T-cell (primary cell): ENCODE measurements at regions of chr19 and their contacts with region 1.

Region 1: DNA sequence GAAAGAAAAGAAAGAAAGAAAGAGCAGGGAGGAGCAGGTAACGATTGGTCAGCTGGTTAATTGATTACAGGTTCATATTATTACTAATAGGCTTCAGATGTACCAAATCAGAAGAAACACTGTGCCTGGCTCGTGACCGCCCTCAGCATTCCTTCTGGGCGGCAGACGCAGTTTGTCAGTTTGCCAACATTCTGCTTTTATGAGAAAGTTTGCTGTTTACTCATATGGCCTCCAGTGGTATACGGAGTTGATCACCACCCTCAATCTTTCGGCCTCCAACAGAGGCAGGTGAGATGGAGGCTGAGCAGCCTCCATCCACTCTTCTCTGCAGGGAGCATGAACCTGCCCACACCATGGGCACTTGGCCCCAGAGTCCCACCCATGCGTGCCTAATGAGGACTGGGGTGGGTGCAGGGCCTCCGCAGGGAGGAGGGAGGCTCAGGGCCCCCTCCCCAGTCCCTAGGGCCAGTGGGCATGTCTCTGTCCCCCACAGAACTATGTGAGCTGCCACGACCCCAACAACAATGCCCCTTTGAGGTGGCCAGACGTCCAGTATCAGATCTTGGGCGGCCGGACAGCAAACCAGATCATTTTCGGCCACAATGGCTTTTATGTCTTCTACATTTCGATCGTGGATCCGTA is 8.8 kb downstream of the PRR22 start:
- DNase-seq: no peak
- ATAC-seq: no peak
- H3K4me3 ChIP-seq: no peak overlapping the region
- H3K4me3 Mint-ChIP-seq: no peak overlapping the region
- H3K27ac ChIP-seq: no peak overlapping the region
- H3K27ac Mint-ChIP-seq: no peak overlapping the region
- H3K4me1 ChIP-seq: no peaks in the 10 kb centered on the region
- H3K4me1 Mint-ChIP-seq: no peaks in the 10 kb centered on the region
- H3K27me3 ChIP-seq: peaks cover 0 to 24% of the 10 kb centered on the region in 2 experiments
- H3K27me3 Mint-ChIP-seq: peaks cover 0 to 3% of the 10 kb centered on the region in 2 donors

Region 2: DNA sequence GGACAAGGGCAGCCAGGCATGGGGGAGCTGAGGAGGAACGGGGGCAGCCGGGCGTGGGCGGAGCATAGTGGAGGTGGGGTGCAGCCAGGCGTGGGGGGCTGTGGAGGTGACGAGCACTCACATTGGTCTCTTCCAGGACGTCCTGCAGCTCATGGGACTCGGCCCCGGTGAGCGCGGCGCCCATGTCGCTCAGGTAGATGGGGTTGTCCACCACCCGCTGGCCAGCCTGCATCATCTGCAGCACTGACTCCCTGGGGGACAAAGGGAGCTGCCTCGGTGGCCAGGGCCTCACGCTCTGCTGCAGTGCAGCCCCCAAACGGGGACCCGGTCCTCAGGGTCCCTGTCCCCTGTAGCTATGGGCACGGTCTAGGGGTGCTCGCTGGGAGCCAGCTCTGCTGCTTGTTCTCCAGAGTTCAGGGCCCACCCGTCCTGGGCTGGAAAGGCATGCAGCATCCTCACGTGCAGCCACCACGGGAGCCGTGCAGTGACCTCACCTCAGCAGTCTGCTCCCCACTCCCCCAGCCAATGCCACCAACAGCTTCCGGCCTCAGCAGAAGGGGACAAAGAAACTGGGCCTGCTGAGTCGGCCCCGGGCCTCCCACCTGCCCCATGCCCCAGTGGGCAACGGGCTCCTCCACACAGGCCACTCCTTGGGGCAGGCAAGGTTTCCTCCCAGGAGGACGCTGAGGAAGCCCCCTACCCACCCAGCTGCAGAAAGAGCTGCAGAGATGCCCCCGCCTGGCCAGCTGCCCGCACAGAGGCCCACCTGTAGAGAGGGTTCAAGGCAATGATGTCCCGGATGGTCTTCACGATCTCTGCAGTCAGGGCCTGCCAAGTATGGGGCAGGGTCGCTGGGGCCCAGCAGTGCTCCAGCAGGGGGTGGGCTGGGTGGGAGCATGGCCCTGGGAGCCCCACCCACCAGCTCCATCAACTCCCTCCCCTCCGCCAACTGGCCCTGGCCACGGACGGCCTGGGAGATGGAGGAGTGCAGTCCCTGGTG is 67.9 kb before region 1 on chr19:
- CTCF ChIA-PET with region 1: no interaction called
- POLR2A ChIA-PET with region 1: no interaction called
- DNase-seq: no peak
- ATAC-seq: peak in 2 of 4 experiments; percentile 10 to 17
- H3K4me3 ChIP-seq: no peak overlapping the region
- H3K4me3 Mint-ChIP-seq: no peak overlapping the region
- H3K27ac ChIP-seq: no peak overlapping the region
- H3K27ac Mint-ChIP-seq: no peak overlapping the region
- H3K4me1 ChIP-seq: no peaks in the 10 kb centered on the region
- H3K4me1 Mint-ChIP-seq: no peaks in the 10 kb centered on the region
- H3K27me3 ChIP-seq: no peaks in the 10 kb centered on the region
- H3K27me3 Mint-ChIP-seq: no peaks in the 10 kb centered on the region

Region 3: DNA sequence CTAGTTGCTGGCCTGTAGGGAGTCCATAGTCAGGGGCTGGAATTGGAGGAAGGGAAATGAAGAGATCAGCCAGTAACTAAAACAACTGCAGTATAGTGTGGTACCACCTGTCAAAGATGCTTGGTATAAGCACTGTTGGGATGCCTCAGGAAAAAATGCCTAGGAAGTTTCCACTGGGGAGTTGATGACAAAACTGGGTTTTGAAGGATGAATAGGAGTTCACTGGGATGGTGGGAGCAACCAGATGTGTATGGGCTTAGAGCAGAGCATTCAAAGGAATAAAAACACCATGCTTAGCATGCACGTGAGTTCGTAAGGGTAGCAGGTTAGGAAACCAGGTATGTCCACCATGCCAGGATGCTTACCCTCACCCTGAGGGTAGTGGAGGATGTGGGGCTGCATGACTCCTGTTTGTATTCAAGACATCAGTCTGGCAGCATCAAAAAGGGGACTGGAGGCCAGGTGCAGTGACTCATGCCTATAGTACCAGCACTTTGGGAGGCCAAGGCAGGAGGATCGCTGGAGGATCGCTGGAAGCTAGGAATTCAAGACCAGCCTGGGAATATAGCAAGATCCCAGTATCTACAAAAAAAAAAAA is 48.2 kb before region 1 on chr19:
- CTCF ChIA-PET with region 1: no interaction called
- POLR2A ChIA-PET with region 1: no interaction called
- DNase-seq: no peak
- ATAC-seq: no peak
- H3K4me3 ChIP-seq: no peak overlapping the region
- H3K4me3 Mint-ChIP-seq: no peak overlapping the region
- H3K27ac ChIP-seq: no peak overlapping the region
- H3K27ac Mint-ChIP-seq: no peak overlapping the region
- H3K4me1 ChIP-seq: no peaks in the 10 kb centered on the region
- H3K4me1 Mint-ChIP-seq: no peaks in the 10 kb centered on the region
- H3K27me3 ChIP-seq: peaks cover 0 to 21% of the 10 kb centered on the region in 2 experiments
- H3K27me3 Mint-ChIP-seq: peaks cover 0 to 10% of the 10 kb centered on the region in 2 donors

Region 4: GRCh38 chr19:5814852-5815246 is 39.1 kb after region 1 on chr19:
- CTCF ChIA-PET with region 1: no interaction called
- POLR2A ChIA-PET with region 1: interaction called in 1 of 2 experiments, 10 read pairs
- DNase-seq: no peak
- ATAC-seq: no peak
- H3K4me3 ChIP-seq: no peak overlapping the region
- H3K4me3 Mint-ChIP-seq: no peak overlapping the region
- H3K27ac ChIP-seq: no peak overlapping the region
- H3K27ac Mint-ChIP-seq: no peak overlapping the region
- H3K4me1 ChIP-seq: no peaks in the 10 kb centered on the region
- H3K4me1 Mint-ChIP-seq: no peaks in the 10 kb centered on the region
- H3K27me3 ChIP-seq: peaks cover 0 to 15% of the 10 kb centered on the region in 2 experiments
- H3K27me3 Mint-ChIP-seq: peaks cover 1 to 8% of the 10 kb centered on the region in 2 donors

Region 5: GRCh38 chr19:5913739-5914357 is 138.1 kb after region 1 on chr19 and contains the start of gene CAPS:
- CTCF ChIA-PET with region 1: no interaction called
- POLR2A ChIA-PET with region 1: no interaction called
- DNase-seq: no peak
- ATAC-seq: no peak
- H3K4me3 ChIP-seq: no peak within 1 kb of the TSS
- H3K4me3 Mint-ChIP-seq: no peak within 1 kb of the TSS
- H3K27ac ChIP-seq: no peak within 1 kb of the TSS
- H3K27ac Mint-ChIP-seq: no peak within 1 kb of the TSS
- H3K4me1 ChIP-seq: no peaks in the 10 kb centered on the region
- H3K4me1 Mint-ChIP-seq: no peaks in the 10 kb centered on the region
- H3K27me3 ChIP-seq: no peaks in the 10 kb centered on the region
- H3K27me3 Mint-ChIP-seq: no peaks in the 10 kb centered on the region
- total RNA-seq, gene CAPS: 43.3 to 74.8 (median 69.8) TPM